Dendritic cell treated with granulocyte-macrophage colony-stimulating factor and Interleukin-4, amounts not matched to agents 40 ng/mL and 50 ng/mL, for 4 days (primary cell): ENCODE measurements at regions of chr1 and their contacts with region 1.

Region 1: GRCh38 chr1:61049850-61050540 is 32.4 kb upstream of the NFIA start:
- H3K4me3 Mint-ChIP-seq: peak overlapping the region; percentile 82
- H3K27ac Mint-ChIP-seq: peak overlapping the region; percentile 60
- H3K4me1 Mint-ChIP-seq: peaks cover 30% of the 10 kb centered on the region
- H3K27me3 Mint-ChIP-seq: peaks cover 46% of the 10 kb centered on the region

Region 2: DNA sequence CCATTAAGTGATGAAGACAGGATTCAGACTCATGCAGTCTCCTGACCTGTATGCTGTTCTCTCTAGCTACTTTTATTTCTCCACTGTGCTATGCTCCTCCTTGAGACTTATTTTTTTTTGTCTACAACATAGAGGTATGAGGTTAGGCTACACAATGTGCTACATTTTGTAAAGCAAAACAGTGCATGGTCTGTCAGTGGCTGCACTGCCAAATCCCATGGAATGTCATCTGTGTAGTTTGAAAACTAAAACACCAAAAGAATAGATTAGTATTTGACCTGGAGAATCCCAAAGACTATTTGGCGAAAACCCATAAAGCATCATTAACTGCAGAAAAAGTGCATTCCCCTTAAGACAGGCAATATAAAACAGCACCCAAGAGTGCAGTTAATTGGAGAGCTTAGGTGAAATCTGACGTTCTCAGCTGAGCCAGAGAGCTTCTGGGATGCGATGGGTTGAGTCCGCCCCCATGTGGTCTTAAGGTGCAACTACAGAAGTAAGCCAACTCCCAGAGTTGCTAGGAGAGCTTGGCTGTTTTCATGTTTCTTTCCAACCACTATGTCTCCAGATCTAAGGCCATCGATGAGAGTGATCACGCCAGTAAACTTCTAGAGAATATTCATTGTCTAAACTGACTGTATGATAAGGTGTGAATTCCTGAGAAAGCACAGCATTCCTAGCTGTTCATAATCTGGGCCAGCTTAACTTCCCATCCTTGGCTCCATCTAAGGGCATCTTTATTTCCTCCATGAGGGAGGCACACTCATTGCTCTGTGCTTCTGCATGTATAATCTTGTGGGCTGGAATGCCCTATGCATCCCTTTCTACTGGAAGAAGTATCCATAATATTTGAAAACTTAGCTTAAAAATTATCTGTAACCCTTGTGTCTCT is 1102.7 kb before region 1 on chr1:
- intact Hi-C with region 1: no loop called
- H3K4me3 Mint-ChIP-seq: no peak overlapping the region
- H3K27ac Mint-ChIP-seq: no peak overlapping the region
- H3K4me1 Mint-ChIP-seq: no peaks in the 10 kb centered on the region
- H3K27me3 Mint-ChIP-seq: no peaks in the 10 kb centered on the region

Region 3: GRCh38 chr1:59971464-59971911 is 1078.5 kb before region 1 on chr1:
- intact Hi-C with region 1: loop called (anchors 10 kb)
- H3K4me3 Mint-ChIP-seq: no peak overlapping the region
- H3K27ac Mint-ChIP-seq: no peak overlapping the region
- H3K4me1 Mint-ChIP-seq: no peaks in the 10 kb centered on the region
- H3K27me3 Mint-ChIP-seq: peaks cover 4% of the 10 kb centered on the region

Region 4: GRCh38 chr1:61084491-61085031 is 34.6 kb after region 1 on chr1:
- intact Hi-C with region 1: loop called (anchors 5 kb)
- H3K4me3 Mint-ChIP-seq: peak overlapping the region; percentile 88
- H3K27ac Mint-ChIP-seq: no peak overlapping the region
- H3K4me1 Mint-ChIP-seq: peaks cover 29% of the 10 kb centered on the region
- H3K27me3 Mint-ChIP-seq: peaks cover 14% of the 10 kb centered on the region

Region 5: DNA sequence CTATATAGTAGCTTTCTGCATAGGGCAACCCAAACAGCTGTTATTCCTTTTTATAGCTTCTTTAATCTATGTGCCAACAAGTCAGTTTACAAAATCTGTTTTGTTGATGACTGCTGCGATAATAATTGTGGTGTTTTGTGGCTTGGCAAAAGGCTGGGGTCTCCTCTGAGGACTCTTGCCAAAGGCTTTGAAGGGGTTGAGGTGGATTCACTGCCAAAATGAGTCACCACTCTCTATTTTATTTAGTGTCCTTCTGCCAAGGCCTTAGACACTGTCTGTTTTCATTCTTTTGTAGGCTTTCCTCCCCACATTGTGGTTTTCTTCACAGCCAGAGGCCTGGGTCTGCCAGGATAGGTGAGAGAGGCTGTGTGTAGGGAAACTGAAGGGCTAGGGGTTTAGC is 194.1 kb after region 1 on chr1:
- intact Hi-C with region 1: loop called (anchors 10 kb)
- H3K4me3 Mint-ChIP-seq: no peak overlapping the region
- H3K27ac Mint-ChIP-seq: no peak overlapping the region
- H3K4me1 Mint-ChIP-seq: peaks cover 20% of the 10 kb centered on the region
- H3K27me3 Mint-ChIP-seq: no peaks in the 10 kb centered on the region

Region 6: GRCh38 chr1:61343734-61344420 is 293.9 kb after region 1 on chr1:
- intact Hi-C with region 1: loop called (anchors 5 kb)
- H3K4me3 Mint-ChIP-seq: no peak overlapping the region
- H3K27ac Mint-ChIP-seq: no peak overlapping the region
- H3K4me1 Mint-ChIP-seq: peaks cover 6% of the 10 kb centered on the region
- H3K27me3 Mint-ChIP-seq: no peaks in the 10 kb centered on the region

Region 7: GRCh38 chr1:61453111-61453961 is 403.3 kb after region 1 on chr1:
- intact Hi-C with region 1: loop called (anchors 5 kb)
- H3K4me3 Mint-ChIP-seq: no peak overlapping the region
- H3K27ac Mint-ChIP-seq: peak overlapping the region; percentile 19
- H3K4me1 Mint-ChIP-seq: peaks cover 43% of the 10 kb centered on the region
- H3K27me3 Mint-ChIP-seq: no peaks in the 10 kb centered on the region

Region 8: DNA sequence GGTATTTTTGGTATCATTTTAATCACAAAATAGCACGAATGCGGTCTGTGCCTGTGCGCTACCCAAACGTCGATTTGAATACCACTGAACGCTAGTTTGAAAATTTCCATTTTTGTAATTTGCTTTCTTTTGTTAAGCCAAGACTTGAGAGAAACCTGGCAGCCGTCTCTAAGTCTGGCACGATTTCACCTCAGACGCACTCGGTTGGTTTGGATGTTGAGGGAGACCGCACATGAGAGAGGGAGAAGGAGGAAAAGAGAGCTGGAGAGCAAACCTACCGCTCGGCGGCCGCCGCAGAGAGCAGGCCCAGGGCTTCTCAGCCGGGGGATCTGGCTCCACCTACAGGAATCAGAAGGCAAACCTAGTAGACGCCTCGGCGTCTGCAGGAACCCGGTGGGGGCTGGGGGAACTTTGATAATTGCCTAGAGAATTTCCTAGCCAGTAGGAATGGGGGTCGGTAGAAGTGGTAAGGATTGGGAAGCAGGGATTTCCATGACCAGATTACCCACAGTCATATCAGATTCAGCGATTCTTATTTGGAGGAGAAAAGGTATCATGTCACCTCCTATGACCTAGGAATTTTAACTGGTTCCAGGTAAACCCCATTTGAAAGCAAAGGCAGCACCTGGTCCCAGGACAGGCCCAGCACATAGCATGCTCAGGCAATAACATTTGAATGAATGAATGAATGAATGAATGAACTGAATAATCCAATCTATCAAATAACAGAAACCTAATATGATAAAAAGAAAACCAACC is 591.8 kb after region 1 on chr1:
- intact Hi-C with region 1: loop called (anchors 5 kb)
- H3K4me3 Mint-ChIP-seq: peak overlapping the region; percentile 76
- H3K27ac Mint-ChIP-seq: peak overlapping the region; percentile 95
- H3K4me1 Mint-ChIP-seq: peaks cover 43% of the 10 kb centered on the region
- H3K27me3 Mint-ChIP-seq: peaks cover 3% of the 10 kb centered on the region